ENCODE measurements at regions of chr10 and their contacts with region 1.

Region 1: GRCh38 chr10:92880233-92880861 is 32.0 kb downstream of the EXOC6 start:
- DNase-seq: peak; percentile 37
- ATAC-seq: peak; percentile 81
- H3K4me3 ChIP-seq: no peak overlapping the region
- H3K27ac ChIP-seq: no peak overlapping the region
- H3K4me1 ChIP-seq: no peaks in the 10 kb centered on the region
- H3K27me3 ChIP-seq: no peaks in the 10 kb centered on the region
- CTCF ChIP-seq: peak; percentile 42 to 69 (median 64); a peak in 5 of 6 replicates
- POLR2A ChIP-seq: no peak
- RAD21 ChIP-seq: peak; percentile 79

Region 2: GRCh38 chr10:92517034-92517655 is 363.2 kb before region 1 on chr10:
- CTCF ChIA-PET with region 1: interaction called, 12 read pairs
- POLR2A ChIA-PET with region 1: no interaction called
- RAD21 ChIA-PET with region 1: no interaction called
- intact Hi-C with region 1: loop called (anchors 2 kb)
- DNase-seq: peak; percentile 64
- ATAC-seq: peak; percentile 96
- H3K4me3 ChIP-seq: no peak overlapping the region
- H3K27ac ChIP-seq: no peak overlapping the region
- H3K4me1 ChIP-seq: no peaks in the 10 kb centered on the region
- H3K27me3 ChIP-seq: no peaks in the 10 kb centered on the region
- CTCF ChIP-seq: peak; percentile 71 to 84 (median 73); a peak in 5 of 6 replicates
- POLR2A ChIP-seq: no peak
- RAD21 ChIP-seq: peak; percentile 77

Region 3: DNA sequence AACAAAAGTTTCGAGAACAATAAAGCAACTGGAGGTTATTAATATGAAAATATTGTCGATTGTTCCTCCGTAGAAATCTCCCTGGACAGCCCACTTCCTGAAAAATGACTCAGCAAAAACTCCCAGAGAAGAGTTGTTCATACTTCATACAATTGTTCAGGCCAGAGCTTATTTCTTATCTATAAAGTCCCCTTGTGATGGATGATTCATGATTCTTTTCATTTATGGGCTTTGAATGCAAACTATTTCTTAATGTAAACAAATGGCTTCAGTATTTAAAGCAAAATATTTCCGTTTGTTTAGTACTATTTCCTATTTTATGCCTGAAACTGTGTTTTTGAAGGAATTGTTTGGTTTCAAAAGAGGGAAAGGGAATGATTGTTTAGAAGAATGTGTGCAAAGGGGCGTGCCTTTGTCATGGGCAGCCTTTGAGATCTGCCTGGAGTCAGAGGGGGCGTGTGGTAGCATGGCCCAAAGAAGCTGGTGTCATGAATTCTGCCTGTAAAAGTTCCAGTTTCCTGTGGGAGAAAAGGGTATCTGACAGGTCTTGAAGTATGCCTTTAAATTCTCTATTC is 58.2 kb before region 1 on chr10:
- CTCF ChIA-PET with region 1: interaction called, 4 read pairs
- POLR2A ChIA-PET with region 1: no interaction called
- RAD21 ChIA-PET with region 1: no interaction called
- intact Hi-C with region 1: loop called (anchors 2 kb)
- DNase-seq: no peak
- ATAC-seq: no peak
- H3K4me3 ChIP-seq: no peak overlapping the region
- H3K27ac ChIP-seq: no peak overlapping the region
- H3K4me1 ChIP-seq: peaks cover 0 to 11% of the 10 kb centered on the region in 2 experiments; a peak in 2 of 4 replicates
- H3K27me3 ChIP-seq: no peaks in the 10 kb centered on the region
- CTCF ChIP-seq: no peak
- POLR2A ChIP-seq: no peak
- RAD21 ChIP-seq: no peak

Region 4: DNA sequence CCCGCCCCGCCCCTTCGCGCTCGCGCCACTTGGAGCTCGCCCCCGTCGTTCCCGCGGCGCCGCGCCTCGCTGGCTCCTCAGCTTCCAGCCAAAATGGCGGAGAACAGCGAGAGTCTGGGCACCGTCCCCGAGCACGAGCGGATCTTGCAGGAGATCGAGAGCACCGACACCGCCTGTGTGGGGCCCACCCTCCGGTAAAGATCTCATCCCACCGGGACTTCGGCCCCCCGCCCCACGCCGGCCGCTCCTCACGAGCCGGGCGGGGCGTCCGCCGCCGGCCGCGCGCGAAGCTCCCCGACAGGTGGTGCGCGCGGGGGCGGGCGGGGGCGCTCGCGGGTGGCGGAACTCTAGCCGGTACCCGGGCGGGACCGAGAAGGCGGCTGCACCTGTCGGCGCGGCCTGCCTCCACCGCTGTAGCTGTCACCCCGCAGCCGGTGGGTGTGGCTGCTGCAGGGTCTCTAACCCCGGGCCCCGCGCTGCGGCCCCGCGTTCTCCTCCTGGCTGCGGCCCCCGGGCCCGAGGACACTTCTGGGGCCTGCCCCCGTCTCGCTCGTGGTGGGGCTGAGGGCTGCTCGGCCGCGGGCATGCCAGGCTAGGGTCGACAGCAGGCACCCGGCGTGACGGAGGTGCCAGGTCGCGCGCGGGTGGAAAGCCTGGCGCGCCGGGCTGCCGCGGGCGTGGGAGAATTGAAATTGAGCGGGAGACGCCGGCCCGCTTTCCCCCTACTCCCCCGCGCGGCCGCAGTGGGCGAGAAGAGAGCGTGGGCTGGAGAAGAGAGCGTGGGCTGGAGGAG is 31.7 kb before region 1 on chr10 and contains the start of gene EXOC6:
- CTCF ChIA-PET with region 1: interaction called, 10 read pairs
- POLR2A ChIA-PET with region 1: no interaction called
- RAD21 ChIA-PET with region 1: no interaction called
- intact Hi-C with region 1: loop called (anchors 5 kb)
- DNase-seq: peak; percentile 71
- ATAC-seq: peak; percentile 86
- H3K4me3 ChIP-seq: peak within 1 kb of the TSS; percentile 73 to 89
- H3K27ac ChIP-seq: peak within 1 kb of the TSS; percentile 68
- H3K4me1 ChIP-seq: peaks cover 4 to 15% of the 10 kb centered on the region in 2 experiments; a peak in 3 of 4 replicates
- H3K27me3 ChIP-seq: no peaks in the 10 kb centered on the region
- CTCF ChIP-seq: no peak
- POLR2A ChIP-seq: no peak
- RAD21 ChIP-seq: no peak
- total RNA-seq, gene EXOC6: 12.9 TPM

Region 5: DNA sequence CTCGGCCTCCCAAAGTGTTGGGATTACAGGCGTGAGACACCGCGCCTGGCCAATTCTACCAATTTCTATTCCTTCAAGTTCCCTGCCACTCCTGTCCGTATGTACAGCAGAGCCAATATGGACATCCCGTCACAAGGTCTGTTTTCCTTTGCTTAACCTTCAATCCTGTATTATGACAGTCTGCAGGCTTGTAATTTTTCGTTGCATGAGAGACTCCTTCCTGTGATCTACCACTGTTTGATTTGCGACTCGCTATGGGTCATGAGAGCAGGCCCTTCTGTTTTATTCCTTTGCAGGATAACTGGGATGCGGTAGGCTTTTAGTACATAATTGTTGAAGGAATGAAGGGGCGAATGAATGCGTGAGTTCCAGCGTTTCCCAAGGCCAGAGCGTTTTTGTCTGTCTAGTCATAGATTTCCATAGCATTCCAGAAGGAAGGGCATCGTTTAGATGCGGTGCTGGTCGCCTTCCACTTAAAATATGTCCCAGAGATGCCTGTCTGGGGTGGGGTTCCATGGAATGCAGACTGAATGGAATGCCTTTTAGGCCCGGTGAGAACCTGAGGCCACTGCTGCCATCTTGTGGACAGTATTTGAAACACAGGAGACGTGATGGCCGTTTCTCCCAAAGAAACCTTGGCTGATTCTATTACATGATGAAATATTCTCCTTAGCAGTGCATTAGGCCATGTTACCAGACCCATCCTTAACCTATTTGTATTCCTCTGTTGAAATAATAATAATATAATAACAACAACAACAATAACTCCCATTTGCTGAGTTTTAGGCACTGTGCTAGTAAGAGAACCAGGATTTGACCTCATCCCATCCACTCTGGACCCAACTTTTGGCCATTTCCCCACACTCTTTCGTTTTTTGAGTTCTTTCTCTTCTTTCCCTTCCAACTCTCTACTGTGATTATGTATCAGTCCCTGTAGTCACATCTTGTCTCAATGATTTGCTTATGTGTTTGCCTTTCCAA is 408.6 kb after region 1 on chr10:
- CTCF ChIA-PET with region 1: no interaction called
- POLR2A ChIA-PET with region 1: no interaction called
- RAD21 ChIA-PET with region 1: no interaction called
- intact Hi-C with region 1: loop called (anchors 1 kb)
- DNase-seq: peak; percentile 78
- ATAC-seq: peak; percentile 96
- H3K4me3 ChIP-seq: peak overlapping the region in 1 of 2 experiments; percentile 29; a peak in 1 of 4 replicates
- H3K27ac ChIP-seq: peak overlapping the region; percentile 43; the same call in 1 of the 2 replicates
- H3K4me1 ChIP-seq: peaks cover 5 to 23% of the 10 kb centered on the region in 2 experiments
- H3K27me3 ChIP-seq: no peaks in the 10 kb centered on the region
- CTCF ChIP-seq: peak; percentile 67 to 85 (median 75)
- POLR2A ChIP-seq: no peak
- RAD21 ChIP-seq: peak; percentile 92